Thyroid gland (tissue), 4 donors: ENCODE measurements at regions of chr1 and their contacts with region 1.

Region 1: DNA sequence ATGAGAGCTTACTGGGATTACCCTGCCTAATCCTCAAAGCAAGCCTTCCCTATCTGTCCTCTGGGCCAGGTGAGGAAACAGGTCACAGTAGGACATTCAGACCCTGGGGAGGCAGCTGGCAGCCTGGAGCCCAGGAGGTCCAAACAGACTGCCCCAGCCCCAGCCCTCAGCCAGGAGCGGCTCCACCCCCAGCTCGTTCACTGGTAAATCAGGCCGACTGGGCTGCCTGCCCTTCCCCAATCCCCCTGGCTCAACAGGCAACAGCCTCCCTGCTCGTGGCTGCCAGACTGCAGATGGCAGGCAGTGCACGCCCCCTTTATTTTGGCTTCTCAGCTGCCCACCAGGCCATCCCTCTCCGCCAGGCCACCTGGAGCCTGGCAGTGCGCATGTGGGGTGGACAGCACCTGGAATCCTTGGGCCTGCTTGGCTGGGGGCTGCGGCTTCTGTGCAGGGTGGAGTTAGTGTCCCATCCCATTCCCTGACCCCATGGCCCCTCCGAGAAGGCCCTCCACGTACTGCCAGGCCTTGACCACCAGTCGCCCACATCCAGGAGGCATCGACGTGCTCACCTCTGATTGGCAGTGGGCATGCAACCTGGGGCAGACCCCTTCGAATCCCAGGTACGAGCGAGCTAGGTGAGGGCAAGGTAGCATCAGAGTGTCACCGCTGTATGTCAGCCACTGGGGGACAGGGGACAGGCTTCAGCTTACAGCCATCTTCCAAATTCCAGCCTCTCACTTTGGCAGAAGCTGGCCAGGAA is 11.2 kb upstream of the ZNF670 start:
- DNase-seq: no peak
- H3K4me3 ChIP-seq: no peak overlapping the region
- H3K27ac ChIP-seq: no peak overlapping the region
- H3K4me1 ChIP-seq: no peaks in the 10 kb centered on the region
- H3K27me3 ChIP-seq: no peaks in the 10 kb centered on the region
- CTCF ChIP-seq: no peak
- POLR2A ChIP-seq: no peak

Region 2: DNA sequence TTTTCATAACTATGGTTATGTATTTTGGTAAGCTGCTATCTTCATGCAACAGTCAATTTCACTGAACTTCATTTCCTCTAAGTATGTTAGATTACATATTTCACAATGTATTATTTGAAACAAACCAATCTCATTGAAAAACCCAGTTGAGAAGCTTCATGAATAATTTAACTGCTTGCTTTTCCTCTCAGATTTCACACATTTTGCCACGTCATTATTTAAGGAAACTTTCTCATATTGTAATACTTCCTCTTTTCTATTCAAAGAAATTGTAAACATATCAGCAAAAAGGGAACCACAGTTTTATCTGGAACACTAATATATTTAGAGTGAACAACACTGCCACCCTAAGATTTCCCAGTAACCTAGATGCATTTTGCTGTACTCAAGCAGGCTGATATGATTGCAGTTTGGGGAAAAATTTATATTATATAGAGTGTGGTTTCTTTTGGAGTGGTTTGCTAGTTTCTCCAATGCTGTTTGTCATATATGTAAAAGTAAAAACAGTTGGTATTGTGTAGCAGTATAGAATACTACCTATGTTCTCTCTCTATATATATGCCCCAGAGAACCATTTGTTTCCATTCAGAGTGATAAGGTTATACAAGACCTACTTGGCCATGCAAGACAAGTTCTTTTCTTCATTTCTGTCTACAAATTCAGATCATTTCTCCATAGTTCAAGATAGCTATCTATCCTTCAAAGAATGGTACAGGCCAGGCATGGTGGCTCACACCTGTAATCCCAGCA is 129.7 kb before region 1 on chr1:
- intact Hi-C with region 1: no loop called
- DNase-seq: no peak
- H3K4me3 ChIP-seq: no peak overlapping the region
- H3K27ac ChIP-seq: no peak overlapping the region
- H3K4me1 ChIP-seq: no peaks in the 10 kb centered on the region
- H3K27me3 ChIP-seq: no peaks in the 10 kb centered on the region
- CTCF ChIP-seq: no peak
- POLR2A ChIP-seq: no peak

Region 3: GRCh38 chr1:247172996-247173395 is 83.2 kb after region 1 on chr1:
- intact Hi-C with region 1: loop called (anchors 10 kb)
- DNase-seq: no peak
- H3K4me3 ChIP-seq: no peak overlapping the region
- H3K27ac ChIP-seq: no peak overlapping the region
- H3K4me1 ChIP-seq: no peaks in the 10 kb centered on the region
- H3K27me3 ChIP-seq: no peaks in the 10 kb centered on the region
- CTCF ChIP-seq: no peak
- POLR2A ChIP-seq: no peak